ENCODE measurements at regions of chr20 and their contacts with region 1.

Region 1: DNA sequence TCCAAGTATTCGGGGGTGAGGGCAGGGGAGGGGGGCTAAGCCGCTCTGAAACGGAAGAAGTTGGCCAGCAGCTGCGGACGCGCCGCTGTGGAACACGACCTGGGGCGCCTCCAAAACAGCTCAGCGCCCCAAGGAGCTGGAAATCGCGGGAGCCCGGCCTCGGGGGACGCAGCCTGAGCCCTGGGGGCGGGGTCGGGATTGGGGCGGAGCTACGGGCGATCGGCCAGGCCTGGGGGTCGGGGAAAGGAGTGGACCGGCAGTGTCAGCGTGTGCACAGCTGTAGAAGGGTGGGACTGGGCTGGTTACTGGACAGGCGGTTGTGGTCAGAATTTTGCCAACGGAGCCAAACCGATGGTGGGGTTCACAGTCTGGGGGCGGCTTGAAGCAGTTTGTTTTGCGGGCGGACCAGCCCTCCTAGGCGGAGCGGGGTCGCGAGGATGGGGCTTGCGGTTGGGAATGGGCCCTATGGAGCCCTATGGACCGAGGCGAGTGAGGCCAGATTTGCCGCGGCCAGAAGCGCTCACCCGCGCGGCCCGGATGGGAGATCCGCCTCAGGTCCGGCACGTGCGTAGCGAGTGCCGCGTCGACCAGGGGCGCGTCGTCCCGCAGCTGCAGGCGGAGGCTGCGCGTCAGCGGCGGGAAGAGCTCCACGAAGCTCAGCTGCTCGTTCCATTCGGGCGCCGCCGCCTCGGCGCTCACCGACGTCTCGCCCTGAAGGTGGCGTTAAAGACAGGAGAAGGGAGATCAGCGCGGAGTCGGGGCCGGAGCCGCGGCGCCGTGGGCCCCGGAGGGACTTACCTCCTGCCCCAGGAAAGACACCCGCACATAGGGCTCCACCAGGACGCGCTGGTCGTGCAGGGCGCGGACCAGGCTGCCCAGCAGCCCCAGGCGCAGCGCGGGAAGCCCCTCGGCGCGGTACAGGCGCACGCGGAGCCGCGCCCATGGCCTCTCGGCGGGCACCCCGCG is 14.3 kb upstream of the SPAG4 start:
- DNase-seq: peak; percentile 87
- H3K4me3 Mint-ChIP-seq: peak overlapping the region; percentile 63
- H3K27ac Mint-ChIP-seq: no peak overlapping the region
- H3K4me1 Mint-ChIP-seq: peaks cover 11% of the 10 kb centered on the region
- H3K27me3 Mint-ChIP-seq: peaks cover 86% of the 10 kb centered on the region

Region 2: GRCh38 chr20:35523298-35523888 is 77.9 kb before region 1 on chr20:
- CTCF ChIA-PET with region 1: no interaction called
- DNase-seq: peak; percentile 54
- H3K4me3 Mint-ChIP-seq: no peak overlapping the region
- H3K27ac Mint-ChIP-seq: no peak overlapping the region
- H3K4me1 Mint-ChIP-seq: no peaks in the 10 kb centered on the region
- H3K27me3 Mint-ChIP-seq: peaks cover 3% of the 10 kb centered on the region

Region 3: DNA sequence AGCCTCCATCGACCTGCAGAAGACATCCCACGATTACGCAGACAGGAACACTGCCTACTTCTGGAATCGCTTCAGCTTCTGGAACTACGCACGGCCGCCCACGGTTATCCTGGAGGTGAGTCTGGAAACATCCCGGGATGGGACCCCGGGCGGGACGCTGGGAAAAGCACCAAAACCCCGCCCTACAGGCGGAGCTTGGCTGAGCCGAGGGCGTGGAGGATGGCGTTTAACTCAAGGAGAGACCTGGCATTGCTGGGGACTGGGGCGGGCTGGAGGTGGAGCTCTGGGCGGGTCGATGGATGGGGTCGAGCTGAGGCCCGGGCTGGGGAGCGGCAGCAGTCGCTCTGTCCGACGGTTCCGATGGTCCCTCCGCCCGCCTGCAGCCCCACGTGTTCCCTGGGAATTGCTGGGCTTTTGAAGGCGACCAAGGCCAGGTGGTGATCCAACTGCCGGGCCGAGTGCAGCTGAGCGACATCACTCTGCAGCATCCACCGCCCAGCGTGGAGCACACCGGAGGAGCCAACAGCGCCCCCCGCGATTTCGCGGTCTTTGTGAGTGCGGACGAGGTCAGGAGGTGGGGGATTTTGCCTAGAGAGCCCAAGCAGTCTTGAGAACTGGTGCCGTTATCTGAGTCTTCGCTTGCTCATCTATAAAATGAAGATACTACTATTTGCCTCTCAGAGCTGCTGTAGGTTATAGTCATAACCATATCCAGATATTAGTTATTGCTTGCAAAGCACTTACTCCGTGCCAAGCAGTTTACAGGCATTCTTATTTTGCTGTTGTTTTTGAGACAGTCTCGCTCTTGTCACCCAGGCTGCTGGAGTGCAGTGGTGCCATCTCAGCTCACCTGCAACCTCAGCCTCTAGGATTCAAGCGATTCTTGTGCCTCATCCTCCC is 18.2 kb after region 1 on chr20:
- CTCF ChIA-PET with region 1: interaction called, 12 read pairs
- DNase-seq: peak; percentile 80
- H3K4me3 Mint-ChIP-seq: peak overlapping the region; percentile 84
- H3K27ac Mint-ChIP-seq: peak overlapping the region; percentile 55
- H3K4me1 Mint-ChIP-seq: peaks cover 42% of the 10 kb centered on the region
- H3K27me3 Mint-ChIP-seq: peaks cover 23% of the 10 kb centered on the region

Measured in activated naive CD4-positive, alpha-beta T cell treated with anti-CD3 and anti-CD28 coated beads, Interleukin-2, amount 10 ng/mL, durations not matched to agents 7 days and 5 days (primary cell).